ENCODE measurements at regions of chr4 and their contacts with region 1.

Region 1: GRCh38 chr4:127616898-127617297 is 15.9 kb upstream of the INTU start:
- DNase-seq: no peak
- CTCF ChIP-seq: no peak

Region 2: DNA sequence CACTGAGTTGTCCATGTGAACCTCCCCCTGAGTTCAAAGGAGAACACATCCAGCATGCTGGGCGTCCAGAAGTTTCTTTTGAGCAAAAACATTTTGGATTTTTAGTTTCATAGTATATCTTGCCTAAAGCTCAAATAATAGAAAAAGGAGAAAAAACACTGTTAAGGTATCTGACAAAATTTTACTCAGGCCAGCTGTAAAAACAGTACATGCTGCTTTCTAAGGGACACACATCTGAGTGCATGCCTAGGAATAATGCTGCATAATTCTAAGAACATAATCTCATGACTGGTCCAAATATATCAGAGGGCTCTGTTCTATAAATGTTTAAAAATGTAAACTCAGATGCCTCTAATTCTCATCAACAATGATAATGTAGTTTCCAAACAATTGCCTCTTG is 545.5 kb before region 1 on chr4:
- in situ Hi-C with region 1: no loop called
- DNase-seq: no peak
- CTCF ChIP-seq: no peak

Region 3: GRCh38 chr4:127732613-127733328 is 115.9 kb after region 1 on chr4:
- in situ Hi-C with region 1: loop called (anchors 10 kb)
- DNase-seq: peak; percentile 65
- CTCF ChIP-seq: peak; percentile 37

Region 4: GRCh38 chr4:127856813-127857447 is 240.0 kb after region 1 on chr4:
- in situ Hi-C with region 1: no loop called
- DNase-seq: peak; percentile 45
- CTCF ChIP-seq: no peak

Measured in GM13976 (cell line).